PC-9 (cell line): ENCODE measurements at regions of chr2 and their contacts with region 1.

Region 1: GRCh38 chr2:227817850-227818674 is 4.4 kb downstream of the CCL20 start:
- DNase-seq: peak; percentile 92 to 100
- H3K4me3 ChIP-seq: peak overlapping the region; percentile 55
- H3K27ac ChIP-seq: peak overlapping the region; percentile 98
- H3K4me1 ChIP-seq: peaks cover 56% of the 10 kb centered on the region
- H3K27me3 ChIP-seq: no peaks in the 10 kb centered on the region
- CTCF ChIP-seq: no peak

Region 2: GRCh38 chr2:227703280-227703732 is 114.8 kb before region 1 on chr2:
- CTCF ChIA-PET with region 1: no interaction called
- POLR2A ChIA-PET with region 1: no interaction called
- intact Hi-C with region 1: loop called (anchors 1 kb)
- DNase-seq: peak; percentile 75 to 94
- H3K4me3 ChIP-seq: peak overlapping the region; percentile 41
- H3K27ac ChIP-seq: peak overlapping the region; percentile 92
- H3K4me1 ChIP-seq: peaks cover 37% of the 10 kb centered on the region
- H3K27me3 ChIP-seq: no peaks in the 10 kb centered on the region
- CTCF ChIP-seq: no peak

Region 3: GRCh38 chr2:227780981-227781615 is 37.0 kb before region 1 on chr2:
- CTCF ChIA-PET with region 1: interaction called, 14 read pairs
- POLR2A ChIA-PET with region 1: no interaction called
- intact Hi-C with region 1: no loop called
- DNase-seq: peak in 1 of 2 experiments; percentile 7
- H3K4me3 ChIP-seq: no peak overlapping the region
- H3K27ac ChIP-seq: no peak overlapping the region
- H3K4me1 ChIP-seq: no peaks in the 10 kb centered on the region
- H3K27me3 ChIP-seq: no peaks in the 10 kb centered on the region
- CTCF ChIP-seq: no peak

Region 4: DNA sequence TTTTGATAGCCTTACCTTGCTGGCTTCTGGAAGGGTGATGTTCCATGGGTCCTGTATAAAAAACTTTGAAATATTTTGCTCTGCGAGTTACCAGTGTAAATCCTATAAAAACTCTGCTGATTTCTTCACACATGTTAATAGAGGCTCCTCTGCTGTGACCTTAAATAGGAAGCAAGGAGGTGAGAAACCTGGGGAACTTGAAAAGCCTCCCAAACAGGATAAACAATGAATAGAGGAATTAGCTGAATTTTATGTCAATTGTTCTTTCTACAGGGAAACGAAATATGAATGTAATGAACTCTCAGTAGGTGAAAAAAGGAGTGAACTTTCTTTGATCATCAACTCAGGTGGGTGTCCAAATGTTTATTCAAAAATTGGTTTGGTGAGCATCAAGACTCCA is 15.2 kb before region 1 on chr2:
- CTCF ChIA-PET with region 1: no interaction called
- POLR2A ChIA-PET with region 1: no interaction called
- intact Hi-C with region 1: loop called (anchors 1 kb)
- DNase-seq: peak; percentile 7 to 81
- H3K4me3 ChIP-seq: no peak overlapping the region
- H3K27ac ChIP-seq: peak overlapping the region; percentile 35
- H3K4me1 ChIP-seq: peaks cover 14% of the 10 kb centered on the region
- H3K27me3 ChIP-seq: no peaks in the 10 kb centered on the region
- CTCF ChIP-seq: no peak

Region 5: DNA sequence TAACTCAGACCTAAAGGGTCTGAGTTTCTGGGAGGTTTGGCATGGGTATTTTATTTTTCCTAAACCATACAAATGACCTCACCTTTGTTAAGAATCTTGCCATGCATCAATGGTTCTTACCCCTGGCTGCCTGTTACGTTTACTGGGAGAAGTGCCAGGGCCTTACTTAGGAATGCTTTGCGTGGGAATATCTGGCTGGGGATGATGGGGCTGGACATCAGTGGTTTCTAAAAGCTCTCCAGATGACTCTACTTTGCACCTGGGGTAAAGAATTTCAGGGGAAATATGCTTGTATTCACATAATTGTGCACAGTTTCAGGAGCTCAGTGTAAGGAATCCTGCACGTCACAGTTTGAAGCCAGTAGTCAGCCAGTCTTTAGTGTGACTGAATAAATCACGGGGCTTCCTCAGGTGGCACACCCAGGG is 35.2 kb after region 1 on chr2:
- CTCF ChIA-PET with region 1: no interaction called
- POLR2A ChIA-PET with region 1: no interaction called
- intact Hi-C with region 1: loop called (anchors 1 kb)
- DNase-seq: peak; percentile 62 to 63
- H3K4me3 ChIP-seq: no peak overlapping the region
- H3K27ac ChIP-seq: peak overlapping the region; percentile 8; the same call in 1 of the 2 replicates
- H3K4me1 ChIP-seq: peaks cover 24% of the 10 kb centered on the region
- H3K27me3 ChIP-seq: no peaks in the 10 kb centered on the region
- CTCF ChIP-seq: no peak

Region 6: GRCh38 chr2:227862227-227862740 is 44.2 kb after region 1 on chr2:
- CTCF ChIA-PET with region 1: interaction called, 6 read pairs
- POLR2A ChIA-PET with region 1: no interaction called
- intact Hi-C with region 1: loop called (anchors 2 kb)
- DNase-seq: no peak
- H3K4me3 ChIP-seq: no peak overlapping the region
- H3K27ac ChIP-seq: peak overlapping the region; percentile 93
- H3K4me1 ChIP-seq: peaks cover 29% of the 10 kb centered on the region
- H3K27me3 ChIP-seq: no peaks in the 10 kb centered on the region
- CTCF ChIP-seq: peak; percentile 75

Region 7: GRCh38 chr2:227870710-227871374 is 52.8 kb after region 1 on chr2:
- CTCF ChIA-PET with region 1: interaction called, 4 read pairs
- POLR2A ChIA-PET with region 1: no interaction called
- intact Hi-C with region 1: loop called (anchors 1 kb)
- DNase-seq: peak; percentile 65 to 77
- H3K4me3 ChIP-seq: peak overlapping the region; percentile 45; the same call in 1 of the 2 replicates
- H3K27ac ChIP-seq: peak overlapping the region; percentile 55
- H3K4me1 ChIP-seq: peaks cover 9% of the 10 kb centered on the region
- H3K27me3 ChIP-seq: no peaks in the 10 kb centered on the region
- CTCF ChIP-seq: no peak

Region 8: DNA sequence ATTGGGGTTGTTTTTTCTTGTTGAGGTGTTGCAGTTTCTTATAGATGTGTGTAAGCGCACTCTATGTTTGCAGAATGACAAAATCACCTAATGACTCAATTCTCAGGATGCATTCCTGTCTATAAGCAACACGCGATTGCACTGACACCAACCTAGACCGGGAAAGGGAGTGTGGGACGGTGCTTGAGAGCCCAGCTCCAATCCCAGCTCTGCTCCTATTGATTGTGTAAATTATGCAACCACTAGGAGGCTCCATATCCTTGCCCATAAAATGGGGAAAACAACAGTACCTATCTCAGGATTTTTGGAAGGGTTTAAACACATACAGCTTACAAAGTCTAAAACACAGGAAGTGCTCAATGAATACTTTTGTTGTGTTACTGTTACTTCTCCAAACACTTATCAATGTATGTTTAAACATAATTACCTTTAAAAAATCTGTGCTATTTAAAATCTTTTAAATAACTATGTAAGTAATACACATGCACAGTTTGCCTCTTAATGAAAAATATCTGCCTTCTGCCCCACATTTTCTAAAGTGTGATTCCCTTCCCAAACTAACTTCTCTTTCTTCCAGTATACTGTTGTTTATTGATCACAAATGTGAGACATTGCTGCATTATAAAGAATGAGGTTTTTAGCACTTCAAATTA is 230.9 kb after region 1 on chr2:
- CTCF ChIA-PET with region 1: no interaction called
- POLR2A ChIA-PET with region 1: no interaction called
- intact Hi-C with region 1: no loop called
- DNase-seq: peak; percentile 30 to 70
- H3K4me3 ChIP-seq: no peak overlapping the region
- H3K27ac ChIP-seq: no peak overlapping the region
- H3K4me1 ChIP-seq: peaks cover 12% of the 10 kb centered on the region
- H3K27me3 ChIP-seq: no peaks in the 10 kb centered on the region
- CTCF ChIP-seq: peak; percentile 67